Activated CD8-positive, alpha-beta T cell treated with anti-CD3 and anti-CD28 coated beads for 36 hours (primary cell): ENCODE measurements at regions of chr4 and their contacts with region 1.

Region 1: GRCh38 chr4:87926554-87927098 is 48.9 kb upstream of the SPP1 start:
- DNase-seq: no peak
- ATAC-seq: no peak
- H3K4me3 Mint-ChIP-seq: no peak overlapping the region
- H3K27ac Mint-ChIP-seq: no peak overlapping the region
- H3K4me1 Mint-ChIP-seq: no peaks in the 10 kb centered on the region
- H3K27me3 Mint-ChIP-seq: peaks cover 8% of the 10 kb centered on the region
- CTCF ChIP-seq: no peak

Region 2: GRCh38 chr4:87938746-87939145 is 12.1 kb after region 1 on chr4:
- CTCF ChIA-PET with region 1: no interaction called
- POLR2A ChIA-PET with region 1: no interaction called
- intact Hi-C with region 1: loop called (anchors 1 kb)
- DNase-seq: no peak
- ATAC-seq: no peak
- H3K4me3 Mint-ChIP-seq: no peak overlapping the region
- H3K27ac Mint-ChIP-seq: no peak overlapping the region
- H3K4me1 Mint-ChIP-seq: no peaks in the 10 kb centered on the region
- H3K27me3 Mint-ChIP-seq: peaks cover 4% of the 10 kb centered on the region
- CTCF ChIP-seq: no peak

Region 3: GRCh38 chr4:88115587-88115986 is 189.0 kb after region 1 on chr4:
- CTCF ChIA-PET with region 1: no interaction called
- POLR2A ChIA-PET with region 1: no interaction called
- intact Hi-C with region 1: no loop called
- DNase-seq: no peak
- ATAC-seq: no peak
- H3K4me3 Mint-ChIP-seq: no peak overlapping the region
- H3K27ac Mint-ChIP-seq: no peak overlapping the region
- H3K4me1 Mint-ChIP-seq: no peaks in the 10 kb centered on the region
- H3K27me3 Mint-ChIP-seq: no peaks in the 10 kb centered on the region
- CTCF ChIP-seq: no peak

Region 4: GRCh38 chr4:88196013-88196365 is 269.4 kb after region 1 on chr4:
- CTCF ChIA-PET with region 1: no interaction called
- POLR2A ChIA-PET with region 1: no interaction called
- intact Hi-C with region 1: no loop called
- DNase-seq: no peak
- ATAC-seq: no peak
- H3K4me3 Mint-ChIP-seq: no peak overlapping the region
- H3K27ac Mint-ChIP-seq: no peak overlapping the region
- H3K4me1 Mint-ChIP-seq: no peaks in the 10 kb centered on the region
- H3K27me3 Mint-ChIP-seq: no peaks in the 10 kb centered on the region
- CTCF ChIP-seq: no peak